ENCODE measurements at regions of chrX and their contacts with region 1.

Region 1: DNA sequence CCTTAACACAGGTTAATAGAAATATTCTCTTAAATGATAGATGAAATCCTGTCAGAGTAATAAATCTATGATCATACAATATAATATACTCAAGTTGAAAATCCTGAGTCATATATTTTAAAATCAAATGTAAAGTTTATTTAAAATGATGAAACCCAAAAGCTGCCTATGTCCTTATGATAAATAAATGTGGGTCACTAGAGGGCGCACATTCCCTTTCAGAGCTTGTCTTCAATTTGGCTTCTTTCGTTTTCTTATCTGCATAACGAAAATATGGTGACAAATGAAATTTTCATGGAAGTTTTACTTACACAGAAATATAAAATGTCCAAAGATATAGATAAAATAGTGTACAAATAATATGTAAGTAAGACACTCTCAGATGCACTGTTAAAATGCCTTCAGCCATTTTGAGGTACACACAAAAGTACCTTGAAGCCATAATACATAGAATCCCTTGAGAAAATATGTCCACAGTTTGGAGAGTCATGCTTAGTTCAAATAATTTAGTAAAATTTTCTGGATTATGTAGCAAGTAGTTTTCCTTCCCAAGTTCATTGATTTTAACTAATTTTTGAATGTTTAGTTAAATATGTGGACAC is 680.4 kb downstream of the DMD start:
- DNase-seq: peak; percentile 67
- H3K4me3 ChIP-seq: peak overlapping the region; percentile 17
- H3K27ac ChIP-seq: no peak overlapping the region
- H3K4me1 ChIP-seq: no peaks in the 10 kb centered on the region
- H3K27me3 ChIP-seq: peaks cover 3% of the 10 kb centered on the region
- CTCF ChIP-seq: peak; percentile 83

Region 2: GRCh38 chrX:31337332-31337731 is 1193.6 kb before region 1 on chrX:
- CTCF ChIA-PET with region 1: no interaction called
- POLR2A ChIA-PET with region 1: no interaction called
- intact Hi-C with region 1: no loop called
- DNase-seq: no peak
- H3K4me3 ChIP-seq: no peak overlapping the region
- H3K27ac ChIP-seq: no peak overlapping the region
- H3K4me1 ChIP-seq: no peaks in the 10 kb centered on the region
- H3K27me3 ChIP-seq: no peaks in the 10 kb centered on the region
- CTCF ChIP-seq: no peak

Region 3: DNA sequence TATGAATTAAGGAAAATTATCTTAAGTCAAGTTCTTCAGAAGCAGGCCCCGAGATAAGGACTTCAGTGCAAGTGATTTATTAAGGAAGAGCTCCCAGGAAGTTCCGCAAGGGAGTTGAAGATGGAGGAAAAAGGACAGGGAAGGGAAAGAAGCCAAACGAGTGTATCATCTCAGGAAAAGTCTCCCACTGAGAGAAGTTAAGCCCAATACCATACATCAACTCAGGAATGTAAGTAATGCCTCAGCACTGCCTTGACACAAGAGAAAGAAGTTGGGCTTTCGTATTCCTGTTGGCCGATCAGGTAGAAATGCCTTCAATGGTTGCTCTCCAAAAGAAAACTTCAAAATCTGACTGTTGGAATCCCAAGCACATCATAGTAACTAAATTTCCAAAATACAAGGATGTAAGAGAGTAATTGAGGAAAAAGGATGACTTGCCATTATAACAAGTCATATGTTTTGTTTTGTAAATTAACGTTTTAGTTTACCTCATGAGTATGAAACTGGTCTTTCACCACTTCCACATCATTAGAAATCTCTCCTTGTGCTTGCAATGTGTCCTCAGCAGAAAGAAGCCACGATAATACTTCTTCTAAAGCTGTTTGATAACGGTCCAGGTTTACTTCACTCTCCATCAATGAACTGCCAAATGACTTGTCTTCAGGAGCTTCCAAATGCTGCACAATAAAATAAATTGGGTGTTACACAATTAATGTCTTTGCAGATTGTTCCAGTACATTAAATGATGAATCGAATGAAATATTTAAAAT is 113.8 kb after region 1 on chrX:
- CTCF ChIA-PET with region 1: no interaction called
- POLR2A ChIA-PET with region 1: no interaction called
- intact Hi-C with region 1: no loop called
- DNase-seq: no peak
- H3K4me3 ChIP-seq: no peak overlapping the region
- H3K27ac ChIP-seq: no peak overlapping the region
- H3K4me1 ChIP-seq: no peaks in the 10 kb centered on the region
- H3K27me3 ChIP-seq: no peaks in the 10 kb centered on the region
- CTCF ChIP-seq: no peak

Region 4: GRCh38 chrX:32673193-32673592 is 142.3 kb after region 1 on chrX:
- CTCF ChIA-PET with region 1: no interaction called
- POLR2A ChIA-PET with region 1: no interaction called
- intact Hi-C with region 1: loop called (anchors 2 kb)
- DNase-seq: peak; percentile 22
- H3K4me3 ChIP-seq: no peak overlapping the region
- H3K27ac ChIP-seq: no peak overlapping the region
- H3K4me1 ChIP-seq: no peaks in the 10 kb centered on the region
- H3K27me3 ChIP-seq: peaks cover 6% of the 10 kb centered on the region
- CTCF ChIP-seq: peak; percentile 41

Region 5: DNA sequence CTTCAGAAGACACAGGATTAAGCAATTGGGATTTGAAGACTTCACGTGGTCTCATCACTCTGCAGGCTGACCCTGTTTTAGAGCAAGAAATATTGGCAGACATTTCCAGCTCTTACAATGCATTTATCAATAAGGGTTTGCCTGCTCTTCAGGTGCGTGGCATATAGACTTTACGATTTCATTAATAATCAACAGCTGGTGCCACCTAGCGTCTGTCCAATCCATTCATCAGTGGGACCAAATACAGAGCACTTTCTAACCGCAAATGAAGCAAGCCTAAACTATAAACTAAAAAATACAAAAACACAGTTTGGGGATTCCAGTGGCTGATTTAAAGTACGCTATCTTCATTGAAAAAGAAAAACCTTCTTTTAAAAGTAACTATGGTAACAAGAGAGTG is 805.9 kb after region 1 on chrX:
- CTCF ChIA-PET with region 1: no interaction called
- POLR2A ChIA-PET with region 1: no interaction called
- intact Hi-C with region 1: loop called (anchors 5 kb)
- DNase-seq: peak; percentile 25
- H3K4me3 ChIP-seq: no peak overlapping the region
- H3K27ac ChIP-seq: no peak overlapping the region
- H3K4me1 ChIP-seq: no peaks in the 10 kb centered on the region
- H3K27me3 ChIP-seq: no peaks in the 10 kb centered on the region
- CTCF ChIP-seq: peak; percentile 60

Measured in A673 (cell line).